ENCODE measurements at regions of chr9 and their contacts with region 1.

Region 1: GRCh38 chr9:126055381-126055985 is 271.1 kb upstream of the MVB12B start:
- DNase-seq: peak; percentile 26

Region 2: GRCh38 chr9:126240835-126241234 is 185.4 kb after region 1 on chr9:
- intact Hi-C with region 1: no loop called
- DNase-seq: no peak

Region 3: GRCh38 chr9:126756876-126757415 is 701.5 kb after region 1 on chr9:
- intact Hi-C with region 1: loop called in 1 of 2 experiments (anchors 10 kb)
- DNase-seq: no peak